BJ (cell line): ENCODE measurements at regions of chr11 and their contacts with region 1.

Region 1: DNA sequence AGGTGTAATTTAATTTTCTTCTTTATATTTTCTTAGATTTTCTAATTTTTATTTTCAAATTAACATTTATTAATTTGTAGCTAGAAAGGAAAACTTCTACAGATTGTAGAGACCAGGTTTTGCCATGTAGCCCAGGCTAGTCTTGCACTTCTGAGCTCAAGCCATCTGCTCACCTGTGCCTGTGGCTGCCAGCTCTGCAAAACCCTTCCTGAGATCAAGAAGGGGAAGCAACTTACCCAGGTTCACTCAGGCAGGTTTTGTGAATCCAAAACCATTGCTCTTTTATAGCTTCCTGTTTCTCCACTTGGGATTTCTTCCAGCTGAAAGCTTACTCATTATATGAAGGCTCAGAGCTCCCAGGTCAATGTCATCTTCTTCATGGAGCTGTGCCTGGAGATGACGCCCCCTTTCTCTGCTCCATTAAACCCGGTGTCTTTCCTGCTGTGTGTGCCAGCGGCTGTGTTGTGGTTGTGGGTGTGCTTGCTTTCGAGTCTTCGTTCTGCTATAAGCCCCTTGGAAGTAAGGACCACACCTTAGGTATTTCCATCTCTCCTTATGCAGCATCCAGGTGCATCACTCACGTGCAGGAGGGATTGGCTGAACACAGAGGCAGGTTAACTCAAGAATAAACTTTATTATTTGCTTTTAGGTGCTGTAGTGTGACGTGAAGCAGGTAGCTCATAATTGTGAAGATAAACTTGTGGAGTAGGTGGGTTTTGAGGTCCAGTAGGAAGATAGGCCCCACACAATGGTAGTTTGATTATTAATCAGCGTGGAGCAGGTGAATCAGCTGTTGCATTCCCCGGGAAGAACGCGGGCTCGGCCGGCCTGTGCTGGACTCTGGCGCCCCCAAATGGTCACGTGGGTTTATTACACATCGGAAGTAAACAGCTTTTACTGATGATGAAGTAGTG is 42.2 kb upstream of the INCENP start:
- DNase-seq: peak; percentile 19
- H3K4me3 ChIP-seq: no peak overlapping the region
- H3K27me3 ChIP-seq: no peaks in the 10 kb centered on the region
- CTCF ChIP-seq: peak; percentile 87

Region 2: DNA sequence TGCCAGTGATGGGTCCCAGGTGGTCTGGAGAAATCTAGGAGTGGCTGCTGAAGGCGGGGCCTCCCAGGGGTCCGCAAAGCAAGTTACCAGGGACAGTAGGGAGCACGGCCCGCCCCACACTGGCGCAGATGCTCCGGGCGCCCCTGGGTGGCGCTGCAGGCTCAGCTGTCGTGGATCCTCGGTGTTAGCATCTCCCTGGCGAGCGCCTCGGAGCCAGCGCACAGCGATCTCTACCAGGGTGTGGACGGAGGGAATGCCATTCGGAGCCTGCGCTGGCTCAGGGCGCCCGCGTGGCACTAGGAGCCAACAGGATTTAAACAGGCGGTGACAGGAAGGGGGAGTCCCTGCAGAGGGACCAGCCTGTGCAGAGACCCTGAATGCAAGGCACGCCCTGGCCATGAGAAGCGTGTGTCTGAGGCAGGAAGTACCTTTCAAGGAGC is 210.5 kb before region 1 on chr11:
- CTCF ChIA-PET with region 1: interaction called, 47 read pairs
- POLR2A ChIA-PET with region 1: no interaction called
- DNase-seq: no peak
- H3K4me3 ChIP-seq: no peak overlapping the region
- H3K27me3 ChIP-seq: no peaks in the 10 kb centered on the region
- CTCF ChIP-seq: peak; percentile 97

Region 3: DNA sequence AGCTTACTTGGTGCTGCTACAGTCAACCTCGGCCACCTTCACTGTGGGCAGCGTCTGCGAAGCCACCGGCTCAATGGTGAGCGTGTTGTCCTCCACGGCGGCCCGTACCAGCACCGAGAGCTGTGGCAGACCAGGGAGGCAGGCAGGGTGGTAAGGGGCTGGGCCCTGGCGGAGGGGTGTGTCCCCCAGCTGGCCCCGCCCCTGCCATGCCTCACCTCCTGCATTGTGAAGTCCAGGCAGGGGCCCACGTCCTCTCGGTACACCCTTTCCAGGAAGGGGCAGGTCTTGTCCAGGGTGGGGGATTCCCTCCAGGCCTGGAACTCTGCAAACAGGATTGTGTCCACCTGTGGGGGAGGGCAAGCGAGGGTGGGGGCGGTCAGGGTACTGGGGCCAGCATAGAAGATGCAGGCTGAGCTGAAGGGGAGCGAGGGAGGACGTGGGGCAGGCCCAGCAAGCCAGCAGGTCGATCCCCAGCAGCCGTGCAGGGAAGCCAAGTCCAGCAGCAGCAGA is 177.0 kb before region 1 on chr11:
- CTCF ChIA-PET with region 1: interaction called, 183 read pairs
- POLR2A ChIA-PET with region 1: no interaction called
- DNase-seq: no peak
- H3K4me3 ChIP-seq: no peak overlapping the region
- H3K27me3 ChIP-seq: no peaks in the 10 kb centered on the region
- CTCF ChIP-seq: no peak

Region 4: GRCh38 chr11:61954851-61955421 is 126.7 kb before region 1 on chr11:
- CTCF ChIA-PET with region 1: interaction called, 35 read pairs
- POLR2A ChIA-PET with region 1: no interaction called
- DNase-seq: peak; percentile 48
- H3K4me3 ChIP-seq: peak overlapping the region; percentile 47
- H3K27me3 ChIP-seq: no peaks in the 10 kb centered on the region
- CTCF ChIP-seq: peak; percentile 51

Region 5: GRCh38 chr11:62061351-62062222 is 20.0 kb before region 1 on chr11:
- CTCF ChIA-PET with region 1: interaction called, 18 read pairs
- POLR2A ChIA-PET with region 1: no interaction called
- DNase-seq: no peak
- H3K4me3 ChIP-seq: no peak overlapping the region
- H3K27me3 ChIP-seq: peaks cover 3% of the 10 kb centered on the region; the same call in 1 of the 2 replicates
- CTCF ChIP-seq: no peak

Region 6: GRCh38 chr11:62193952-62194351 is 112.3 kb after region 1 on chr11:
- CTCF ChIA-PET with region 1: no interaction called
- POLR2A ChIA-PET with region 1: no interaction called
- DNase-seq: no peak
- H3K4me3 ChIP-seq: no peak overlapping the region
- H3K27me3 ChIP-seq: peaks cover 4% of the 10 kb centered on the region
- CTCF ChIP-seq: no peak